ENCODE measurements at regions of chr13 and their contacts with region 1.

Region 1: GRCh38 chr13:99087096-99087953 is 109.5 kb upstream of the DOCK9 start:
- DNase-seq: peak; percentile 89
- H3K4me3 Mint-ChIP-seq: peak overlapping the region; percentile 98
- H3K27ac Mint-ChIP-seq: peak overlapping the region; percentile 85
- H3K4me1 Mint-ChIP-seq: peaks cover 21% of the 10 kb centered on the region
- H3K27me3 Mint-ChIP-seq: no peaks in the 10 kb centered on the region
- CTCF ChIP-seq: no peak

Region 2: DNA sequence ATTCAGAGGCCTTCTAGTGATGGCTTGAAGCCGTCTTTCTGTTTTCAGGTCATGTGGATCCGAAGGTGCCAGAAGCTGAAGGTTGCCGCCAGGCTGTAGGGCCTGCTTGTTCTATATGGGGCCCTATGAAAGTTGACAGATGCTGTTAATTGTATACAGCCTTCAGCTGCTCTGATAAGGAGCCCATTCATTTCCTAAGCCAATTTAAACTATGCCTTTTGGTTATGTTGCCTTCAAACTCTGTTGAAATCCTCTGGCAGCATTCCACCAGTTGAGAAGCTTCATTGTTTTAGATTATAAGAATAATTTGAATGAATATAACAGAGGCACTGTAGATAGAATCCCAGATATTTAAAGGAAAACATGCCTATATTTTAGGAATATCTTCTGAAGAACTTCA is 1619.0 kb before region 1 on chr13:
- CTCF ChIA-PET with region 1: no interaction called
- POLR2A ChIA-PET with region 1: no interaction called
- intact Hi-C with region 1: no loop called
- DNase-seq: peak; percentile 42
- H3K4me3 Mint-ChIP-seq: no peak overlapping the region
- H3K27ac Mint-ChIP-seq: no peak overlapping the region
- H3K4me1 Mint-ChIP-seq: no peaks in the 10 kb centered on the region
- H3K27me3 Mint-ChIP-seq: no peaks in the 10 kb centered on the region
- CTCF ChIP-seq: no peak

Region 3: GRCh38 chr13:99045396-99045795 is 41.9 kb before region 1 on chr13:
- CTCF ChIA-PET with region 1: interaction called, 14 read pairs
- POLR2A ChIA-PET with region 1: interaction called, 74 read pairs
- intact Hi-C with region 1: loop called (anchors 1 kb)
- DNase-seq: no peak
- H3K4me3 Mint-ChIP-seq: peak overlapping the region; percentile 13
- H3K27ac Mint-ChIP-seq: peak overlapping the region; percentile 90
- H3K4me1 Mint-ChIP-seq: peaks cover 45% of the 10 kb centered on the region
- H3K27me3 Mint-ChIP-seq: no peaks in the 10 kb centered on the region
- CTCF ChIP-seq: no peak

Region 4: DNA sequence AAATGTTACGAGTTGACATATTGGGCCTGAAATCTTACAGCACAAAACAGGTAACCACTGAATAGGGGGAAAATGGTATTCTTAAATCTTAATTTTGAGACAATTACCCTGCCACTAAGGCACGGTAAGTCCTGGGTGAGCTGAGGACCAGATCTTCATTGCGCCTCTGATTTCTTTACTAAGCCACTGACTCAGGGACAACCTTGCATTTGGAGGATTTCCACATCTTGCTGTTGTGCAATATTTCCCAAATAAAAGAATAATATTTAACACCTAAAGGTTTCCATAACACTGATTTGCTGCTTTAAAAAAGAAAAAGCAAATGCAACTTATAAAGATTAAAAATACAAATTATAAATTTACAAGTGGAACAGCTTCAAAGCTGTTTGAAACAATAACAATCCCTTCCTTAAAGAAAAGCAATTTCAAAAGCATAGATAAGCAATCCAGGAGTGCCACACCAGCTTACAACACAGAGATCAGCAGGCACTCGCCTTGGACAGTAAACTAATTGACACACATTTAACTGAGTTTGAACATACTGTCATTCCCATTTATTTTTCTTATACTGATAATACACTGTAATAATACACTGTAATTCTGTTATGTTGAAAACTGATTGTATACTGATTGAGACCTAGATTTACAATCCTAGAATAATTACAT is 29.9 kb before region 1 on chr13:
- CTCF ChIA-PET with region 1: interaction called, 7 read pairs
- POLR2A ChIA-PET with region 1: interaction called, 32 read pairs
- intact Hi-C with region 1: no loop called
- DNase-seq: peak; percentile 89
- H3K4me3 Mint-ChIP-seq: no peak overlapping the region
- H3K27ac Mint-ChIP-seq: peak overlapping the region; percentile 59
- H3K4me1 Mint-ChIP-seq: peaks cover 47% of the 10 kb centered on the region
- H3K27me3 Mint-ChIP-seq: no peaks in the 10 kb centered on the region
- CTCF ChIP-seq: no peak

Region 5: GRCh38 chr13:99103536-99103935 is 16.2 kb after region 1 on chr13:
- CTCF ChIA-PET with region 1: no interaction called
- POLR2A ChIA-PET with region 1: no interaction called
- intact Hi-C with region 1: no loop called
- DNase-seq: no peak
- H3K4me3 Mint-ChIP-seq: no peak overlapping the region
- H3K27ac Mint-ChIP-seq: no peak overlapping the region
- H3K4me1 Mint-ChIP-seq: no peaks in the 10 kb centered on the region
- H3K27me3 Mint-ChIP-seq: no peaks in the 10 kb centered on the region
- CTCF ChIP-seq: no peak

Region 6: DNA sequence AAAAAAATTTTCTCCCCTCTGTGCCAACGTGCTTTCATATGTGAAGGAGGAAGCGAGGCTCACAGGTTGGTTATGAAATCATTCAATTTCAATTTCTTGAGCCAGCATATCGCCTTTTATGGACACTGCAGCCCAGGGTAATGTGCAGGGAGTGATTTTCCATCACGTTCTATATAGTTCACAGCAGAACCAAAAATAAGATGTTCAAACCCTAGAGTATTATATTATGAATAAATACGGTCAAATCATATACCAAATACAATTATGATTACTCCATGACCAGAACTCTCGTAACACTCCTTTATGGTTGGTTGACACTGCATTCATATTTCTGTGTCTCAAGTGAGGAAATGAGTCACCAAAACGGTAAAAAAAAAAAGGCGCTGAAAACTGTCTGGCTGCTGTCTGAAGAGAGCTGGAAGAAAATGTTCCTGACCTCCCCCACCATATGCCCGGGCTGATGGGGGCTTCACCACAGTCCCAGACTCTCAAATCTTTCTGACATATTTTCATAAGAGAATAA is 37.5 kb after region 1 on chr13:
- CTCF ChIA-PET with region 1: interaction called, 3 read pairs
- POLR2A ChIA-PET with region 1: interaction called, 20 read pairs
- intact Hi-C with region 1: no loop called
- DNase-seq: peak; percentile 84
- H3K4me3 Mint-ChIP-seq: peak overlapping the region; percentile 67
- H3K27ac Mint-ChIP-seq: peak overlapping the region; percentile 44
- H3K4me1 Mint-ChIP-seq: peaks cover 34% of the 10 kb centered on the region
- H3K27me3 Mint-ChIP-seq: no peaks in the 10 kb centered on the region
- CTCF ChIP-seq: no peak

Region 7: DNA sequence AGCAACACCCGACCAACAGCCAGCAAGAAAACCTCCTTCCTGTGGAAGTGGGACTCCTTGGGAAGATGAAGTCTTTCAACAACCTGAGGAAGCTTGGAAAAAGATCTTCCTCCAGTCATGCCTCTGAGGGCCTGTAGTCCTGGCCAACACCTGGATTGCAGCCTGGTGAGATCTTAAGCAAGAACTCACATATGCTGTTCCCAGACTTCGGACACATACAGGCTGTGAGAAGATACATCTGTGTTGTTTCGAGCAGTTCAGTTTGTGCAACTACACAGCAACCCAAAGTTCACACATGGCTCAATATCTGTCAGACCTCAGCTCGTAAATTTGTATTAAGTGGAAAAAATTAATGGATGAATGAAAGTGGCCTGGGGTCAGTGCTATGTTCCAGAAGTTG is 48.3 kb after region 1 on chr13:
- CTCF ChIA-PET with region 1: no interaction called
- POLR2A ChIA-PET with region 1: no interaction called
- intact Hi-C with region 1: no loop called
- DNase-seq: no peak
- H3K4me3 Mint-ChIP-seq: no peak overlapping the region
- H3K27ac Mint-ChIP-seq: no peak overlapping the region
- H3K4me1 Mint-ChIP-seq: peaks cover 6% of the 10 kb centered on the region
- H3K27me3 Mint-ChIP-seq: no peaks in the 10 kb centered on the region
- CTCF ChIP-seq: no peak

Region 8: GRCh38 chr13:99250982-99251825 is 163.9 kb after region 1 on chr13:
- CTCF ChIA-PET with region 1: no interaction called
- POLR2A ChIA-PET with region 1: no interaction called
- intact Hi-C with region 1: no loop called
- DNase-seq: no peak
- H3K4me3 Mint-ChIP-seq: no peak overlapping the region
- H3K27ac Mint-ChIP-seq: no peak overlapping the region
- H3K4me1 Mint-ChIP-seq: no peaks in the 10 kb centered on the region
- H3K27me3 Mint-ChIP-seq: no peaks in the 10 kb centered on the region
- CTCF ChIP-seq: no peak

Region 9: DNA sequence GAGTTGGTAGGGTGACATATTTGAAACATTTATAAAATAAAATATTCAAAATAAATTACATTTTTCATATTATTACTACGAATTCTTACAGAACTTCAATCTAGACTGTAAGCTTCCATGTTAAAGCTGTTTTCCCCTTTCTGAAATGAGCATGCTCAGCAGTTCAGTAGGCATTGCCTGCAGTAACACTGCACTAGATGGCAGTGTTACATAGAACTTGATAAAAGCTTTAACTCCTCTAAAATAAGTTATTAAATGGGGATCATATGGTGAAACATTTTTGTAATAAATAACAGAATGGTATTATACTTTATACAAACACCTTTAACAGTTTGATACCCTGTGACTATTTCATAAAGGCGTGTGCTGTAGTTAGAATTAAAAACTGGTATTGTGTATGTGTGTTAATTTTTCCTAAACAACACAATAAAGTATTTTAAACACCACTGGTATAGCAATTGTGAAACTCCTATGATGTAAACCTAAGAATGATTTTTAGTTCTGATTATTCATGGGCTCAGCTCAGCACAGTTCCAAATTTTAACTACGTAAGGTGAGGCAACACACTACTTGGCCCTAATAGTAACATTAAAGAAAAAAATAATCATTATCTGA is 182.4 kb after region 1 on chr13:
- CTCF ChIA-PET with region 1: interaction called, 4 read pairs
- POLR2A ChIA-PET with region 1: interaction called, 4 read pairs
- intact Hi-C with region 1: loop called (anchors 5 kb)
- DNase-seq: peak; percentile 54
- H3K4me3 Mint-ChIP-seq: no peak overlapping the region
- H3K27ac Mint-ChIP-seq: no peak overlapping the region
- H3K4me1 Mint-ChIP-seq: no peaks in the 10 kb centered on the region
- H3K27me3 Mint-ChIP-seq: no peaks in the 10 kb centered on the region
- CTCF ChIP-seq: peak; percentile 43